ENCODE measurements at regions of chr12 and their contacts with region 1.

Region 1: GRCh38 chr12:53675651-53676453 is at the start of gene ATP5MC2:
- DNase-seq: peak; percentile 99
- CTCF ChIP-seq: peak; percentile 99

Region 2: DNA sequence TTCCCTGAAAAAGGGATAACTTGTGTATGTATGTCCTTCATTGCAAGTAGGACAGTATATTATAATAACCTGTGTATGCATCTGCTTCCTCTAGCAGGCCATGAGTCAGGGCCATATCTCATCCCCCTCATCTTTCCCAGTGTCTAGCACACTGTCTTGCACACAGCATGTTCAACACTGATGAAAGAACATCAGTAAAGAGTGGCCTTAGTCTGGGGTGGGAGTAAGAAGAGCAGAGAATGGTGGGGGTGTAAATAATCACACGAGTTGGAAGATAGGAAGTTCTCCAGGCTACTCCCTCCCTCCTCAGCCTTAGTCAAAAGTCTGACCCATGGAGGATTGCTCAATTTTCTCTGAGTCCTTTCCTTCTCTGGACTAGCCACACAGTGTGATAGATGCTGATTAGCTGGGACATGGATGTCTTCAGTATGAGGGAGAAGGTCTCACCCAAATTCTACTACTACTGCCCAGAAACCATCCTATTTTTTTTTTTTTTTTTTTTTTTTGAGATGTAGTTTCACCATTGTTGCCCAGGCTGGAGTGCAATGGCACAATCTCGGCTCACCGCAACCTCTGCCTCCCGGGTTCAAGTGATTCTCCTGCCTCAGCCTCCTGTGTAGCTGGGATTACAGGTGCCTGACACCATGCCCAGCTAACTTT is 310.5 kb before region 1 on chr12:
- CTCF ChIA-PET with region 1: no interaction called
- POLR2A ChIA-PET with region 1: no interaction called
- DNase-seq: no peak
- CTCF ChIP-seq: no peak

Region 3: GRCh38 chr12:53551889-53552291 is 124.0 kb before region 1 on chr12:
- CTCF ChIA-PET with region 1: interaction called, 11 read pairs
- POLR2A ChIA-PET with region 1: no interaction called
- DNase-seq: peak; percentile 30
- CTCF ChIP-seq: peak; percentile 2

Region 4: DNA sequence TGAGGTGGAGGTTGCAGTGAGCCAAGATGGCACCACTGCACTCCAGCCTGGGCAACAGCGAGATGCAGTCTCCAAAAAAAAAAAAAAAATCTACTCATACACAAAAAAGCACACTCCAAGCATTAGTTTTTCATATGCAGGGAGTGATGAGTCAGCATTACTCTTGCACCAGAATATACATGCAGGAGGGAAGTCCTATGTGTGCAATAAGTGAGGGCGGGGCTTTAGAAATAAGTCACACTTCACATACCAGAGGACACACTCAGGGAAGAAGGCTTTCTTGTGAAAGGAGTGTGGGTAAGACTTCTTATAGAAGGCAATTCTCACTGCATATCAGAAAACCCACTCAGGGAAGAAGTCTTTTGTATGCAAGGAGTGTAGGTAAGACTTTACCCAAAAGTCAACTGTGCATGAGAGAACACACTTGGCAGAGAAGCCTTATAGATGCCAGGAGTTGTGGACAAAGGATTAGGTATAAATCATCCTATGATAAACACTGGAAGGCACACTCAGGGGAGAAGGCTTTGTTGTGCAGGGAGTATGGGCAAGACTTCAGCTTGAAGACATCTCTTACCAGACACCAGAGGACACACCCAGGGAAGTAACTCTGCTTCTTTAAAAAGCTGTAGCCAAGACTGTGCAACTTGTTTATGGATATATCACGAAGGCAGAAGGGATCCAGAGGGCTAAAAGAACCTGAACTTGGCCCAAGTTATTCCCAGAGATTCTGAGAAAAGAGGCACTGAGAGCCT is 100.2 kb before region 1 on chr12:
- CTCF ChIA-PET with region 1: interaction called, 10 read pairs
- POLR2A ChIA-PET with region 1: interaction called, 3 read pairs
- DNase-seq: no peak
- CTCF ChIP-seq: no peak

Region 5: GRCh38 chr12:53625946-53626701 is 49.7 kb before region 1 on chr12 and contains the start of gene ATF7:
- CTCF ChIA-PET with region 1: interaction called, 29 read pairs
- POLR2A ChIA-PET with region 1: no interaction called
- DNase-seq: peak; percentile 97
- CTCF ChIP-seq: no peak

Region 6: DNA sequence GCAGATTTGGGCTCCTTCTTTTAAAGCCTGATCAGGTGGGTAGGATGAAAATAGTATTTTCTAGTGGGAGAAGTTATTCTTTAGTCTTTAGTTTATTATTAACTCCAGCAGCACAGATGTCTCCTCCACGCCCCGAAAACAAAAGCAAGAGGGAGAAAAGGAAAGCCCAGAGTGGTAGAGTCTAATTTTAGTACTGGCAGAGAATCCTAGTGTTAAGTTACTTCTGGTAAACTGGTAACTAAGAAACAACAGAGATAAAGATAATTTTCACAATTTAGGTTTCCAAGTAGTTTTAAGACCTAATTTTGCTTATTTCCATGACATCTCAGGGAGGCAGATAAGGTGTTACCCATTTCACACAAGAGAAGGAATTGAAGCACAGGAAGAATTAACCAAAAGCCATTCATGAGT is 16.3 kb before region 1 on chr12:
- CTCF ChIA-PET with region 1: interaction called, 10 read pairs
- POLR2A ChIA-PET with region 1: interaction called, 3 read pairs
- DNase-seq: no peak
- CTCF ChIP-seq: no peak

Region 7: GRCh38 chr12:53701518-53702260 is 25.8 kb after region 1 on chr12:
- CTCF ChIA-PET with region 1: interaction called, 10 read pairs
- POLR2A ChIA-PET with region 1: no interaction called
- DNase-seq: peak; percentile 80
- CTCF ChIP-seq: peak; percentile 99

Region 8: DNA sequence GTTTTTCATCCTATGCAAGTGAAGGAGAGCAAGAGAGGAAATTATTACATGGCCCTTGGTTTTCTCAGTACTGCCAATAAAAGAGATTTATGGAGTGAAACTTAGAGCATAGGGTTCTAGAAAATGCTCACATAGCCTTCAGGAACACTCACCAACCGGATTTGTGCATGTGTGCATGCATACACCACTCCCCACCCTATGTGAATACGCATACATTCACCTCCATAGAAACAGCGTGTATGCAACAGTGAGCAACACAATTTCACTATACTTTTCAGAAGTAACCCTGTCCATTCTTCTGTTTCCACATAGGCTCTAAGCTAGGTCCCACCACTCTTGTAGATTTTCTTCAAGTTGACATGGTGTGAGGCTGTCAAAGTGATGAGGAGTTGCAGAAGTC is 231.3 kb after region 1 on chr12:
- CTCF ChIA-PET with region 1: no interaction called
- POLR2A ChIA-PET with region 1: no interaction called
- DNase-seq: no peak
- CTCF ChIP-seq: no peak

Region 9: DNA sequence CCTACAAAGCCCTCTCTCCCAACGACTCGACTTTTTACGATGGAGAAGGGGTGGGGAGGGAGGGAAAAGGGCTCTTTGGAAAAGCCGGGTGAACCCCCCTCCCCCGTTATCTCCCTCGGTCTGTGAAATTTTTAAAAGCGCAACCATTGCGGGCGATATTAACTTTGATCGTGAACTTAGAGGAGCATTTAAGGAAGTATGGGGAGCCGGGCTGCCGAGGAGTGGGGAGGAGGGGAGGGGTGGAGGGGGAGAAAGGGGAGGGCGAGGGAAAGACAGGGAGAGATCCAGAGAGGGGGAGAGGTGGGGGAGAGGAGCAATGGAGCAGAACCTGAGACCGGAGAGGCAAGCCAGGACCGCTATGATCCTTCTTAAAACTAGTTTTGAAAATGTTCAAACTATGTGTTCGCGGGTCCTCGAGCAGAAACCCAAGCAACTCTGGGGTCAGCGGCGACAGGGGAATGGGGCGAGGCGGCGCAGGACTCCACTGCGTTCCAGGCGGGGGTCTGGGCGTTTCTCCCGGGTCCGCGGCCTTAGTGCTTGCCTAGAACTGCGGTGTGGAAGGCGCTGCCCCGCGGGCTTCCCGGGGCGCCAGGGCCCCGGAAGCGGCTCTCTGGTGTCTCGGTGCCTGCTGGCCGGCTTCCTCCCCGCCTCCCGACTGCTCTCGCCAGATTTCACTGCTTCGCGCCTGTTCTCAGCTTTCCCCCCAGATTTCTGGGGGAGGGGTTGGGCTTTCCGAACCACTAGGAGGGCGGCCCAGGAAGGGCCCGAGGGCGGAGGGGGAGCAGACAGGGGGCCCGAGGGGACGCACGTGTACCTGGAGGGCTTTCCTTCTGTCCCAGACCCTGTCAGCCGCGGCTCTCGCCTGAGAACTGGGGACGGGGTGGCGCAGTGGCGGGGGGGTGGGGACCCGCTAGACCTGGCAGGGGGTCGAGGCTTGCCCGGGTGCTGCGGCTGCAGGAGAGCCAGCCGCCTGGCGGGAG is 298.5 kb after region 1 on chr12 and contains the start of gene HOTAIR:
- CTCF ChIA-PET with region 1: no interaction called
- POLR2A ChIA-PET with region 1: no interaction called
- DNase-seq: peak; percentile 58
- CTCF ChIP-seq: no peak

Region 10: GRCh38 chr12:54021432-54022013 is 345.7 kb after region 1 on chr12:
- CTCF ChIA-PET with region 1: no interaction called
- POLR2A ChIA-PET with region 1: no interaction called
- DNase-seq: no peak
- CTCF ChIP-seq: peak; percentile 34

Measured in GM10248 (cell line).